Dendritic cell treated with granulocyte-macrophage colony-stimulating factor and Interleukin-4, amounts not matched to agents 40 ng/mL and 50 ng/mL, for 4 days (primary cell): ENCODE measurements at regions of chr3 and their contacts with region 1.

Region 1: GRCh38 chr3:16370872-16371740 is 106.1 kb downstream of the OXNAD1 start:
- H3K4me3 Mint-ChIP-seq: no peak overlapping the region
- H3K27ac Mint-ChIP-seq: peak overlapping the region; percentile 89
- H3K4me1 Mint-ChIP-seq: peaks cover 88% of the 10 kb centered on the region
- H3K27me3 Mint-ChIP-seq: no peaks in the 10 kb centered on the region

Region 2: DNA sequence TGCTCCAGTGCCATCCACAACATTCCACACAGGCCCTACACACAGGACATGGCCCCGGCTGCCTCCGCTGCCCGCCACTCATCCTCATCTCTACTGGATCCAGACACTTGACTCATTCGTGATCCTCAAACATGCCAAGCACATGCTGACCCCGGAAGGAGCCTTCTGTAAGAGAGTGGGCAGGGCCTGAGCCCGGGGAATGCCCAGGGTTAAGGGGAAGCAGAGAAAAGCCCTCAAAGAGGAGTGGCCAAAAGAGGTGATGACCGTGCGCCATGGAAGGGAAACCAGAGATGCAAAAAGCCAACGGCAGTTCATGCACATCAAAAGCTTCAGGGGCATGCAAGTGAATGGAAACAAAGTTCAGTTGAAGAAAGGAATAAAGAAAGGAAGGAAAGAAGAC is 96.3 kb after region 1 on chr3:
- intact Hi-C with region 1: no loop called
- H3K4me3 Mint-ChIP-seq: no peak overlapping the region
- H3K27ac Mint-ChIP-seq: peak overlapping the region; percentile 33
- H3K4me1 Mint-ChIP-seq: peaks cover 63% of the 10 kb centered on the region
- H3K27me3 Mint-ChIP-seq: no peaks in the 10 kb centered on the region

Region 3: DNA sequence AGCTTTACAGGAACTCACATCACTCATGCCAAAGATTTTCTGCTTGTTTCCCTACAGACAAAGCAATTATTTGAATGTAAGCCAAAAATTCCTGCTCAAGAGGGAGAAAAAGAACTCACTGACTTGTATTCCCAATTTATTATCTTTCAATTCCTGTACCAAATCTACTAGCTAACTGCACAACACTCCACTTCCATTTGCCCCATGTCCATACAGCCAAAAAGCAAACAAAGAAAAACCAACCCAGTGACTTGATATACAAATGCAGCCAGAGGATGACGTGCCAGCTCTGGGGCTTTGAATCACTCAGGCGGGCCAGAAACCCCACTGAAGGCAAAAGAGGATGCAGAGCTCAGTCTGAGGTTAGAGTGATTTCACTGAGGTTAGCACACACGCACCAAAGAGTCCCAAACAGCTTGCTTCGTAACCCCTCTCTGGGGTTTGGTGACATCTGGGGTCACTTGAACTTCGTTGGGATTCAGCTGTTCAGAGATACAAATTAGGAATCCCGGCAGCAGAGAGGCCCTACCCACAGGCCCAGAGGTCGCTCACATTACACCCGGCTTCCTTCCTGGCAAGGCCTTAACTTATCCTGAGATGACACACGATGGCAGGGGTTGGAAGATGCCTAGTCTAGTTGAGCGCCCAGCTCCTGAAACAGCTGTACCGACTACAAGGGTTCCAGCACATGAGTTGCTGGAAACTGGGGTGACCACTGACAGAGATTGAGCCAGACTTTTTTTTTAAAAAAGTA is 140.8 kb after region 1 on chr3:
- intact Hi-C with region 1: loop called (anchors 5 kb)
- H3K4me3 Mint-ChIP-seq: peak overlapping the region; percentile 98
- H3K27ac Mint-ChIP-seq: peak overlapping the region; percentile 96
- H3K4me1 Mint-ChIP-seq: peaks cover 80% of the 10 kb centered on the region
- H3K27me3 Mint-ChIP-seq: no peaks in the 10 kb centered on the region